GM12878 (cell line): ENCODE measurements at regions of chr1 and their contacts with region 1.

Region 1: DNA sequence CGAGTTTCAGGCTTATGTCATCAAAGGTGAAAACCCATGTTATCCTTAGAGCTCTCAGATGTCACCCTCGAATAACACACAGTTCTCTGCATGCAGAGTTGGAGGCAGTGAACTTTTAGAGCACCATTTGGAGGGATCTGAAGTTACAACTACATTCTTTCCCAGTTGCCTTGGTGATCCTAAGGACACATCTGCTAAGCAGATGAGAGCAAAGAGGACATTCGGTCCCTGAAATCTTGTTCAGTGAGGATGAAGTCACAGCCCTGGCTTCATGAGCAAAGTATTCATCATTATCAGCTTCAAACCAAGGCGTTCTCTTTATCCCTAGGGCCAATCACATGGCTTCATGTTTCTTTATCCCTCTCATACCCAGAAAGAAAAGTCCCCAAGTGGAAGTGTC is 23.1 kb upstream of the MCOLN2 start:
- DNase-seq: no peak
- ATAC-seq: no peak
- H3K4me3 ChIP-seq: no peak overlapping the region
- H3K27ac ChIP-seq: no peak overlapping the region
- H3K4me1 ChIP-seq: no peaks in the 10 kb centered on the region
- H3K27me3 ChIP-seq: no peaks in the 10 kb centered on the region
- CTCF ChIP-seq: no peak
- EP300 ChIP-seq: no peak
- POLR2A ChIP-seq: no peak
- RAD21 ChIP-seq: no peak

Region 2: GRCh38 chr1:85033221-85033620 is 13.2 kb after region 1 on chr1:
- CTCF ChIA-PET with region 1: interaction called, 9 read pairs
- POLR2A ChIA-PET with region 1: no interaction called
- RAD21 ChIA-PET with region 1: no interaction called
- SMC1A ChIA-PET with region 1: interaction called, 12 read pairs
- in situ Hi-C with region 1: no loop called
- intact Hi-C with region 1: no loop called
- DNase-seq: no peak
- ATAC-seq: no peak
- H3K4me3 ChIP-seq: no peak overlapping the region
- H3K27ac ChIP-seq: no peak overlapping the region
- H3K4me1 ChIP-seq: no peaks in the 10 kb centered on the region
- H3K27me3 ChIP-seq: no peaks in the 10 kb centered on the region
- CTCF ChIP-seq: no peak
- EP300 ChIP-seq: no peak
- POLR2A ChIP-seq: no peak
- RAD21 ChIP-seq: no peak